HepG2 (cell line): ENCODE measurements at regions of chrX and their contacts with region 1.

Region 1: GRCh38 chrX:71283403-71284143 is at the start of gene NONO:
- DNase-seq: peak; percentile 97
- ATAC-seq: peak; percentile 94
- H3K4me3 ChIP-seq: peak within 1 kb of the TSS; percentile 66 to 81 (median 68)
- H3K27ac ChIP-seq: peak within 1 kb of the TSS; percentile 91
- H3K4me1 ChIP-seq: peaks cover 21% of the 10 kb centered on the region
- H3K27me3 ChIP-seq: no peaks in the 10 kb centered on the region
- CTCF ChIP-seq: peak; percentile 30; the same call in 1 of the 2 replicates
- EP300 ChIP-seq: no peak
- POLR2A ChIP-seq: peak; percentile 62 to 64
- RAD21 ChIP-seq: no peak
- total RNA-seq, gene NONO: 387 and 408 TPM in 2 replicates

Region 2: GRCh38 chrX:71216485-71216884 is 67.1 kb before region 1 on chrX:
- CTCF ChIA-PET with region 1: no interaction called
- POLR2A ChIA-PET with region 1: interaction called, 25 read pairs
- in situ Hi-C with region 1: loop called (anchors 10 kb)
- intact Hi-C with region 1: no loop called
- DNase-seq: peak; percentile 42
- ATAC-seq: no peak
- H3K4me3 ChIP-seq: peak overlapping the region; percentile 76 to 79 (median 78)
- H3K27ac ChIP-seq: peak overlapping the region; percentile 91
- H3K4me1 ChIP-seq: peaks cover 51% of the 10 kb centered on the region
- H3K27me3 ChIP-seq: no peaks in the 10 kb centered on the region; a peak in 1 of 5 replicates
- CTCF ChIP-seq: no peak
- EP300 ChIP-seq: no peak
- POLR2A ChIP-seq: peak in 1 of 2 experiments; percentile 36; a peak in 1 of 4 replicates
- RAD21 ChIP-seq: no peak

Region 3: GRCh38 chrX:71227370-71228062 is 56.1 kb before region 1 on chrX:
- CTCF ChIA-PET with region 1: no interaction called
- POLR2A ChIA-PET with region 1: interaction called, 44 read pairs
- in situ Hi-C with region 1: loop called (anchors 10 kb)
- intact Hi-C with region 1: loop called (anchors 5 kb)
- DNase-seq: peak; percentile 76
- ATAC-seq: peak; percentile 68
- H3K4me3 ChIP-seq: peak overlapping the region in 2 of 3 experiments; percentile 19 to 50; a peak in 3 of 6 replicates
- H3K27ac ChIP-seq: peak overlapping the region; percentile 100
- H3K4me1 ChIP-seq: peaks cover 92% of the 10 kb centered on the region
- H3K27me3 ChIP-seq: no peaks in the 10 kb centered on the region
- CTCF ChIP-seq: peak; percentile 39
- EP300 ChIP-seq: no peak
- POLR2A ChIP-seq: peak; percentile 58 to 64; a peak in 3 of 4 replicates
- RAD21 ChIP-seq: no peak

Region 4: DNA sequence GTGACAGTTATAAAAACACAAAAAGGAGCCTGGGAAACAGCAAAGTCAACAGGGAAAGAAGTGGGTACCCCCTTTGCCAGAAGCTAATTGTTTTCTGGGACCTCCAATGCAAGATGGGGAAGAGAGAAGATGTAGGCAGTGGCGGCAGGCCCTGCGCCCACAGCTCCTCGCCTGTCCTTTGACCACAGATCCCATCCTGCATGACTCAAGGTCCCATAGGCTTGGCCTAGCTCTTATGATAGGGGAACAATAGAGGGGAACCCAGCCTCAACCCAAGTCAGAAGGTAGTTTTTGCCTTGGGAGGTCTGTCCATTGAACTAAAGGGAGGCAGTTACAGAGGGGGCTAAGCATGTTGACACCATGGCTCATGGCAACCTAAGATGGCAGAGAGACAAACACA is 43.8 kb before region 1 on chrX:
- CTCF ChIA-PET with region 1: no interaction called
- POLR2A ChIA-PET with region 1: no interaction called
- in situ Hi-C with region 1: no loop called
- intact Hi-C with region 1: no loop called
- DNase-seq: no peak
- ATAC-seq: no peak
- H3K4me3 ChIP-seq: no peak overlapping the region
- H3K27ac ChIP-seq: peak overlapping the region; percentile 33
- H3K4me1 ChIP-seq: no peaks in the 10 kb centered on the region; the same call in 1 of the 2 replicates
- H3K27me3 ChIP-seq: no peaks in the 10 kb centered on the region
- CTCF ChIP-seq: no peak
- EP300 ChIP-seq: no peak
- POLR2A ChIP-seq: no peak
- RAD21 ChIP-seq: no peak

Region 5: GRCh38 chrX:71254092-71254941 is 29.3 kb before region 1 on chrX and contains the start of gene ZMYM3:
- CTCF ChIA-PET with region 1: no interaction called
- POLR2A ChIA-PET with region 1: interaction called, 18 read pairs
- in situ Hi-C with region 1: no loop called
- intact Hi-C with region 1: no loop called
- DNase-seq: peak; percentile 67
- ATAC-seq: peak; percentile 94
- H3K4me3 ChIP-seq: peak within 1 kb of the TSS; percentile 76 to 88 (median 83)
- H3K27ac ChIP-seq: peak within 1 kb of the TSS; percentile 78
- H3K4me1 ChIP-seq: peaks cover 35% of the 10 kb centered on the region
- H3K27me3 ChIP-seq: no peaks in the 10 kb centered on the region; a peak in 1 of 5 replicates
- CTCF ChIP-seq: no peak
- EP300 ChIP-seq: no peak
- POLR2A ChIP-seq: peak in 1 of 2 experiments; percentile 48; a peak in 1 of 4 replicates
- RAD21 ChIP-seq: no peak; the same call in 1 of the 2 replicates
- total RNA-seq, gene ZMYM3: 26.4 and 34.7 TPM in 2 replicates

Region 6: DNA sequence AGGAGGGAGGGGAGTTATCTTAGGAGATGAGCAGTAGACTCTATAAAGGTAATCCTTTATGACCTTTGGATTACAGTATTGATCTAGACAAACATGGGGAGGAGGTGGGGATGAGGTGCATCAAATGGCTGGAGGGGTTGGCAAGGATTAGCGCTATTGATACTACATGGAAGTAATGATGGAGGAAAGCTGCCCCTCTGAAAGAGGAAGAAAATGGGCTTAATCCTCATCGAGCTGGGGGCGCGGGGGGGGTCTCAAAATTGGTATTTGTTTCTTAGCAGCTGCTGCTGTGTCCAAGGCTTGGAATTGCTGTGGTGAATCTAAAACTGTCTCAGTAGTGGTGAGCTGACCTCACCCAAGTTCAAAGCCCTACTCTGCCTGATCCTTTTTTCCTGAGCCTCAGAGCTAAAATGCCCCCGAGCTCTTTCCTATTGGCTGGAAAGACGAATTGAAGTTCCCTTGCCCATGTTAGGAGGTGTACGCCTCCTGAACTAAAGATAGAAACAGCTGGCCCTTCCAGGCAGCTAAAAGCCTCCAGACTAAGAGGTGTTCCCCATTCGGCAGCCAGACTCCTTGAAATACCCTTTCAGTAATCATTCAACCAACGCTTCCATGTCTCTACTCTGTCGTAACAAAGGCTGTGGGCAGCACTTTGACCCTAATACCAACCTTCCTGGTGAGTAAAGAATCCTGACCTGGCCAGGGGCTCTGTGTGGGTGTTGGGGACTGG is 17.8 kb after region 1 on chrX and contains the start of gene ITGB1BP2:
- CTCF ChIA-PET with region 1: no interaction called
- POLR2A ChIA-PET with region 1: interaction called, 13 read pairs
- in situ Hi-C with region 1: no loop called
- intact Hi-C with region 1: no loop called
- DNase-seq: peak; percentile 43
- ATAC-seq: peak; percentile 51
- H3K4me3 ChIP-seq: no peak within 1 kb of the TSS
- H3K27ac ChIP-seq: peak within 1 kb of the TSS; percentile 63
- H3K4me1 ChIP-seq: peaks cover 62% of the 10 kb centered on the region
- H3K27me3 ChIP-seq: no peaks in the 10 kb centered on the region
- CTCF ChIP-seq: no peak
- EP300 ChIP-seq: no peak; a peak in 1 of 4 replicates
- POLR2A ChIP-seq: no peak
- RAD21 ChIP-seq: no peak
- total RNA-seq, gene ITGB1BP2: 0.21 and 2.2 TPM in 2 replicates